A673 (cell line): ENCODE measurements at regions of chr1 and their contacts with region 1.

Region 1: GRCh38 chr1:204072931-204073836 is at the start of gene SOX13:
- DNase-seq: peak; percentile 87
- H3K4me3 ChIP-seq: peak within 1 kb of the TSS; percentile 79
- H3K27ac ChIP-seq: peak within 1 kb of the TSS; percentile 37
- H3K4me1 ChIP-seq: peaks cover 7% of the 10 kb centered on the region
- H3K27me3 ChIP-seq: no peaks in the 10 kb centered on the region
- CTCF ChIP-seq: no peak
- total RNA-seq, gene SOX13: 9.4 and 11.5 TPM in 2 replicates

Region 2: GRCh38 chr1:203714446-203714845 is 358.7 kb before region 1 on chr1:
- CTCF ChIA-PET with region 1: no interaction called
- POLR2A ChIA-PET with region 1: interaction called, 10 read pairs
- intact Hi-C with region 1: no loop called
- DNase-seq: no peak
- H3K4me3 ChIP-seq: no peak overlapping the region
- H3K27ac ChIP-seq: no peak overlapping the region
- H3K4me1 ChIP-seq: no peaks in the 10 kb centered on the region
- H3K27me3 ChIP-seq: no peaks in the 10 kb centered on the region
- CTCF ChIP-seq: no peak

Region 3: DNA sequence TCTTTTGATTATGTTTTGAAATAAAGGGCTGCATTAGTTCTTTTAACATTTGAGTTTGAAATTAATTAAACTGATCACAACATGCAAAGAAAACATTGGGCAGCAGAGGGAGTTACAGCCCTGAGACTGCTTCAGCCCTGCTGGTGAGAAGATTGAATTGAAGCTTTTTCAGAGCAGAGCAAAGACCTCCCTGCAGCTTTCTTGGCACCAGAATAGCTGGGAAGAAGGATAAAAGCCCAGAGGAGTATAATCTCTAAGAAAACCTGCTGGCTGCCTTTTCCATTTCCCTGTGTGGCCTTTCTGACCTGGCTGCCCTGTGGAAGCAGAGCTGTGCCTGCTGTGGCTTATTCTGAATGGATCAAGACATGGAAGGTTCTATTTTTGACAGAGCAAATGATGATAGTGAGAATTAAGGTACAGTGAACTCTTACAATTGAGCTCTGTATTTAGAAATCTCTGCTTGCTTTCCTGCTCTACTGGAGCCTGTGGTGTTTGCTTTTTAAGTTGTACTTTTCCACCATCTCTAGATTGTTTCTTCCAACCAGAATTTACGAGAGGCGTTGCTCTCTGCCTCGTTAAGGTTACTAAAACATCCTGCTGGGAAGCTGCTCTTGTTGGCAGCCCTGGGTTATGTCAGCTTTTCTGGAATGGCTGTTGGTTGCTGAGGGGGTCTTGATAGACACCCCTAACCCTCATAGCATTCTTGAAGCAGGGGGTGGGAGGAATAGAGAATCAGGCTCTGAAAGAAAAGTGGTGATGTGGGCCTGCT is 201.9 kb before region 1 on chr1:
- CTCF ChIA-PET with region 1: interaction called, 3 read pairs
- POLR2A ChIA-PET with region 1: interaction called, 7 read pairs
- intact Hi-C with region 1: loop called (anchors 5 kb)
- DNase-seq: peak; percentile 86
- H3K4me3 ChIP-seq: no peak overlapping the region
- H3K27ac ChIP-seq: peak overlapping the region; percentile 7
- H3K4me1 ChIP-seq: peaks cover 6% of the 10 kb centered on the region
- H3K27me3 ChIP-seq: no peaks in the 10 kb centered on the region
- CTCF ChIP-seq: peak; percentile 90